ENCODE measurements at regions of chr14 and their contacts with region 1.

Region 1: DNA sequence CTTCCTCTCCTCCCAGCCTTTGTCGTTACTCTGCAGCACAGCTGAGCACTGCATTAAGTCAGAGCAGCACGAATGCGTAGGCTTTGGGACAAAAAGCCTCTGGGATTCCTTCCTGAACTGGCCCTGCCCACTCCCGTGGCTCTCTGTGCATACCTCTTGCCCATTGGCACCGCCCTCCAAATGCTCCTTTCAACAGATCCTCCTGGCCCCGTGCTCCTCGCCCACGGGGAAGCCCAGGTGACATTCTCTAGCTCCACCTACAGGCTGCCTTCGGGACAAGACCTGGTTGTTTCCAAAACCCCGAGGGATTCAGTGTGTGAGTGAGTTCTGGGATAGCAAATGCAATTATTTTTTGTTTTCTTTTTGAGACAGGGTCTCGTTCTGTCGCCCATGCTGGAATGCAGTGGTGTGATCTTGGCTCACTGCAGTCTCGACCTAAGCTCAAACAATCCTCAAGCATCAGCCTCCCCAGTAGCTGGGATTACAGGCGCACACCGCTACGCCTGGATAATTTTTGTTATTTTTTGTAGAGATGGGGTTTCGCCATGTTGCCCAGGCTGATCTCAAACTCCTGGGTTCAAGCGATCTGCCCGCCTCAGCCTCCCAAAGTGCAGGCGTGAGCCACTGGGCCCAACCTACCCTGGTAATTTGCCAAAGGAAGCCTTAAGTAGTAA is 17.9 kb upstream of the TDRD9 start:
- DNase-seq: peak; percentile 36 to 85
- H3K4me3 ChIP-seq: peak overlapping the region; percentile 4 to 24
- H3K27ac ChIP-seq: no peak overlapping the region
- H3K4me1 ChIP-seq: no peaks in the 10 kb centered on the region
- H3K27me3 ChIP-seq: no peaks in the 10 kb centered on the region
- CTCF ChIP-seq: peak; percentile 69 to 82 (median 76)

Region 2: DNA sequence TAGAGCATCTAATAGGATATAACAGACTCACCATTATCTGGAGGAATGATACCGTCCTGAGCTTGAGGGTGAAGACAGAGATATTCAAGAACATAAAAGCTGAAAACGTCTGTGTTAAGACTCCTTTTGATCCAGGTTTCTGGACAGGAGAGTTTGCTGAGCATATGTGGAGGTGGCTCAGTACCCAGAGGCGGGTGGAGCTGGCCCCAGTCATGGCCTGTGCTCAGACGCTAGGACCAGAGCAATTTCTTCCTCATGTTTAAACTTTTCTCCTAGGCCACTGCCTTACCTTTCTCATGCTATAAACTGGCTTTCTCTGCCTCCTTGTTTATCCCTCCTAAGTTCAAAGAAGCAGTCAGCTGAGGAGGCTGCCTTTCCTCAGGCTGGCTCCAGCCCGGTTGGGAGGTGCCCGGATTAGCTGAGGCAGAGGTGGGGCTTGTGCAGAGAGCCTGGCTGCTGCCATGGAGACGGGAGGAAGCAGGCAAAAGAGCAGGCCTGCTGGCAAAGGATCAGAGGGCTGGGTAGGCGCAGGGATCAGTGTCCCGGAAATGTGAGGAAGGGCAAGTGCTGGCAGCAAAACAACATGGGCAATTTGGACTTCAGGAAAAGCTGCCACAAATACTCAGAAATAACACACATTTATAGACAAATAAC is 333.9 kb before region 1 on chr14:
- intact Hi-C with region 1: loop called (anchors 10 kb)
- DNase-seq: peak; percentile 65 to 94
- H3K4me3 ChIP-seq: no peak overlapping the region
- H3K27ac ChIP-seq: peak overlapping the region; percentile 69 to 73
- H3K4me1 ChIP-seq: peaks cover 0 to 14% of the 10 kb centered on the region in 2 donors
- H3K27me3 ChIP-seq: no peaks in the 10 kb centered on the region
- CTCF ChIP-seq: no peak

Region 3: DNA sequence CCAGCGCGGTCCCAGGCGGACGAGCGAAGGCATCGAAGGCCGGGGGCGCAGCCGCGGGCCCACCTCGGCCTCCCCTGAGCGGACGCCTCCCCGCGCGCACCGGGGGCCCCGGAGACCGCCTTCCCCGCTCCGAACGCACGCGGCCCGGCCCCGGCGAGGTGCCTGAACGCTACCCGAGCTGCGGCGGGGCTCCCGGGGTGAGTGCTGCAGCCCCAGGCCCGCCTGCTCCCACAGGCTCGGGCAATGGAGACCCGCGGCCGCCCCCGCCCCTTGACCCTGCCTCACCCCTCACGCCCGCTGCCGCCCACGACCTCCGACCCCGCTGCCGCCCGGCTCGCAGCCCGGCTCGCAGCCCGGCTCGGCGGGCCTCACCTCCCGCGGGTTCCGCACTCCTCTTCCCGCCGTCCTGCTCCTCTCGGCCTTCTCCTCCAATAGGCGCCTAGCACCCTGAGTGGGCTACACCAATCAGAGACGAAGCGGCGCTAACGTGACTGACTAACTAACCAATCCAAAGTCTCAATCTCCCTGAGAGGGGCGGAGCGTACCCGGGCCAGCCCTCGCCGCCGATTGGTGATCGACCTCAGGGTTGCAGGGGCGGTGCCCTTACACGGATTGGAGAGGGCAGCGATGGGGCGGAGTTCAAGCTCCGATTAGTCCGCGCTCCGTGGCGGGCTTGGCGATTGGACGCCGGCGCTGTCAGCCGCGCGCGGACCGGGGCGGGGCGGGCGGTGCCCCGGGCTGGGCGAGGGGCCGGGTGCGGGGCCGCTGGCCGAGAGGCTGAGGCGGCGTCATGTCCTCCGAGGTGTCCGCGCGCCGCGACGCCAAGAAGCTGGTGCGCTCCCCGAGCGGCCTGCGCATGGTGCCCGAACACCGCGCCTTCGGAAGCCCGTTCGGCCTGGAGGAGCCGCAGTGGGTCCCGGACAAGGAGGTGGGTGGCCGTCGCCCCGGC is 195.1 kb before region 1 on chr14 and contains the starts of genes XRCC3 and ZFYVE21:
- intact Hi-C with region 1: no loop called
- DNase-seq: peak; percentile 99 to 100
- H3K4me3 ChIP-seq: peak within 1 kb of the TSS; percentile 94 to 99
- H3K27ac ChIP-seq: peak within 1 kb of the TSS; percentile 77 to 90
- H3K4me1 ChIP-seq: peaks cover 30 to 53% of the 10 kb centered on the region in 2 donors
- H3K27me3 ChIP-seq: no peaks in the 10 kb centered on the region
- CTCF ChIP-seq: no peak
- total RNA-seq, gene XRCC3: 9.0 TPM
- total RNA-seq, gene ZFYVE21: 219 TPM

Region 4: GRCh38 chr14:103749860-103750259 is 160.5 kb before region 1 on chr14:
- intact Hi-C with region 1: no loop called
- DNase-seq: no peak
- H3K4me3 ChIP-seq: no peak overlapping the region
- H3K27ac ChIP-seq: no peak overlapping the region
- H3K4me1 ChIP-seq: no peaks in the 10 kb centered on the region
- H3K27me3 ChIP-seq: no peaks in the 10 kb centered on the region
- CTCF ChIP-seq: peak in 1 of 3 experiments; percentile 29

Region 5: DNA sequence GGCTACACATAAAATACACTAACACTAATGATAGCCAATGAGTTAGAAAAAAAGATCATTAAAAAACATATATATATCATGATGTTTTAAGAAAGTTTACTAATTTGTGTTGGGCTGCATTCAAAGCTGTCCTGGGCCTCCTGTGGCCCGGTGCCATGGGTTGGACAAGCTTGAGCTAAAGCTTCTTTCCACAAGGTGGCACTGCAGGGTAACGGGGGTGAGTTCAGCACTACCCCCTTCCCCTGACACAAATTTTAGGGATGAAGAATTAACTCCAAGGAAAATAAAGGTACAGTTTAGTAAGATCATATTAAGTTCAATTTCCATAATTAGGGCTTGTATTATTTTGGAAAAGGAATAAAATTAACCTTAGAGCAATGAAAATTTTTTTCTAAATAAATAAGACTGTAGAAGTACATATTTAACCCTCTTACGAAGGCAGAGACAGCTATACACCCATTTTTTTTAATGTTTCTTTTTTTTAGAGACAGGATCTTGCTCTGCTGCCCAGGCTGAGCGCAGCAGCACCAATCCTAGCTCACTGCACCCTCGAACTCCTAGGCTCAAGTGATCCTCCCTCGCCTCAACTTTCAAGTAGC is 101.9 kb before region 1 on chr14:
- intact Hi-C with region 1: loop called (anchors 1 kb)
- DNase-seq: peak in 1 of 2 donors; percentile 73
- H3K4me3 ChIP-seq: no peak overlapping the region
- H3K27ac ChIP-seq: no peak overlapping the region
- H3K4me1 ChIP-seq: no peaks in the 10 kb centered on the region
- H3K27me3 ChIP-seq: no peaks in the 10 kb centered on the region
- CTCF ChIP-seq: peak; percentile 83 to 86 (median 85)

Region 6: DNA sequence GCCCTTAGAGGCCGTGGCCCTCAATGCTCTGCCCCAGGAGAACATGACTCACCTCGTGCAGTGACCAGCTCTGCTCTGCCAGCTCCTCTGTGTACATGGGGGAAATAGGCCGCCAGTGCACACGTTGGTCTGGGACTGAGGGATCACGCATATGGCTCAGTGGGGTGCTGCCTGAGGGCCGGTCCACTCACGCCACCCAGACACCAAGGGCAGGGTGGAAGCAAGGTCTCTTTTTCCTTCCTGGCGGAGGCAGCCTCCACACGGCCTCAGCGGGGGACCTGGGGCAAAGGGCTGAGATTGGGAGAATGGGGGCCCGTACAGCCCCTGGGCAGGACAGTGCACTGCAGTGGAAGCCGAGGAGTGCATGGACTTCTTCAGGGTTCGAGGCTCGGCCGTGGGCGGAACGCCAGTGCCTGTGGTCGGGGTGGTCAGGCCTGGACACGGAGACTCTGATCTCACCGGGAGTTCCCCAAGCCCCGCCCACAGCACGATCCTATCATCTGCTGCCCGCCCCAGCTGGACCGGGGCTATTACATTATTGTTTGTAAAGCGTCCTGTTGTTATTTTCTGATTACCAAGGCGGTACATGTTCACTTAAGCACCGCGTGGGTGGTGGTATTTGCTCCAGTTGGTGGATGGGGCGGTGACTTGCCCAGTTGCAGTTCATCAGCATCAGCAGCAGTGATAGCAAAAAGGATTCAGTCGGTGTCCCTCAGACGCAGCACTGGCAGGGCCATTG is 20.9 kb before region 1 on chr14:
- intact Hi-C with region 1: no loop called
- DNase-seq: no peak
- H3K4me3 ChIP-seq: no peak overlapping the region
- H3K27ac ChIP-seq: no peak overlapping the region
- H3K4me1 ChIP-seq: no peaks in the 10 kb centered on the region
- H3K27me3 ChIP-seq: no peaks in the 10 kb centered on the region
- CTCF ChIP-seq: no peak

Region 7: GRCh38 chr14:103960457-103961055 is 50.2 kb after region 1 on chr14:
- intact Hi-C with region 1: no loop called
- DNase-seq: no peak
- H3K4me3 ChIP-seq: no peak overlapping the region
- H3K27ac ChIP-seq: no peak overlapping the region
- H3K4me1 ChIP-seq: no peaks in the 10 kb centered on the region
- H3K27me3 ChIP-seq: no peaks in the 10 kb centered on the region
- CTCF ChIP-seq: no peak

Measured in ascending aorta (tissue), 2 donors.